Panc1 (cell line): ENCODE measurements at regions of chr1 and their contacts with region 1.

Region 1: DNA sequence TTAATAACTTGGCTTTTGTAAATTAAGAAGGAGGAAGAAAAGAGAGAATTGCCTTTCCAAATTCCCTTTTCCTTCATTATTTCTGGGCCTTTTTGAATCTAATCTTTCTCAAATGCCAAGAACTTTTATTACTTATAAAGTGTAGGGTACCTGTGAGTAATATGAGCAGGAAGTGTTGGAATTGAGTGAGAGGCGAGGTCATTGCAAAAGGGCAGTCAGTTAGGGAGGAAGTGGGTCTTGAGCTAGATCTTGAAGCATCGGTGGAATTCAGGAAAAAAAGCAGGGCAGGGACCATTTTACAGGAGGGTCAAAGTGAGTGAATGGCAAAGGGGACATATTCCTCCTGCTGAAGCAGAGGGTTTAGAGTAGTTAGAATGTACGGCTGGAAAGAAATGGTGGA is 23.4 kb downstream of the DDI2 start:
- DNase-seq: no peak
- ATAC-seq: no peak
- H3K4me3 ChIP-seq: no peak overlapping the region
- H3K27ac ChIP-seq: no peak overlapping the region
- H3K4me1 ChIP-seq: no peaks in the 10 kb centered on the region
- H3K27me3 ChIP-seq: no peaks in the 10 kb centered on the region
- CTCF ChIP-seq: no peak

Region 2: DNA sequence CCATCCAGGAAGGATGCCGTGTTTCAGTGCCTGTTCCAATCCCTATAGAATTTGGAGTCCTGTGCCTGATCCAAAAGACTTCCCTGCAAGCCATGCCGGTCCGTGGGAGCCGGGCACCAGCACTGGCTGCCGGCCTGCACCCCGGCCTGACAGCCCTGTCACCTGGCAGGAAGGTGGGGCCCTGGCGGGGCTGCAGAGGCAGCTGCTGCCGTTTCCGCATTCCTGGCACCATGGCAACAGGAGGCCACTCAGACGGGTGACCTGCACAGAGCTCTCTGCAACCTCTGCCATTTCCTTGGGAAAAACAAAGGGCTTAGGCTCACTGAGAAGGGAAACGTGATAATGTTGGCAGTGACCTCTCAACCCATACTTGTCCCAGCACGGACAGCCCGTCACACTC is 550.3 kb before region 1 on chr1:
- CTCF ChIA-PET with region 1: no interaction called
- POLR2A ChIA-PET with region 1: no interaction called
- in situ Hi-C with region 1: no loop called
- intact Hi-C with region 1: no loop called
- DNase-seq: no peak
- ATAC-seq: peak; percentile 36; the same call in 1 of the 2 replicates
- H3K4me3 ChIP-seq: no peak overlapping the region
- H3K27ac ChIP-seq: no peak overlapping the region
- H3K4me1 ChIP-seq: no peaks in the 10 kb centered on the region
- H3K27me3 ChIP-seq: no peaks in the 10 kb centered on the region; the same call in 1 of the 2 replicates
- CTCF ChIP-seq: no peak

Region 3: GRCh38 chr1:15595809-15596617 is 44.7 kb before region 1 on chr1:
- CTCF ChIA-PET with region 1: no interaction called
- POLR2A ChIA-PET with region 1: interaction called, 12 read pairs
- in situ Hi-C with region 1: no loop called
- intact Hi-C with region 1: no loop called
- DNase-seq: no peak
- ATAC-seq: no peak
- H3K4me3 ChIP-seq: no peak overlapping the region
- H3K27ac ChIP-seq: no peak overlapping the region
- H3K4me1 ChIP-seq: no peaks in the 10 kb centered on the region
- H3K27me3 ChIP-seq: no peaks in the 10 kb centered on the region
- CTCF ChIP-seq: no peak

Region 4: DNA sequence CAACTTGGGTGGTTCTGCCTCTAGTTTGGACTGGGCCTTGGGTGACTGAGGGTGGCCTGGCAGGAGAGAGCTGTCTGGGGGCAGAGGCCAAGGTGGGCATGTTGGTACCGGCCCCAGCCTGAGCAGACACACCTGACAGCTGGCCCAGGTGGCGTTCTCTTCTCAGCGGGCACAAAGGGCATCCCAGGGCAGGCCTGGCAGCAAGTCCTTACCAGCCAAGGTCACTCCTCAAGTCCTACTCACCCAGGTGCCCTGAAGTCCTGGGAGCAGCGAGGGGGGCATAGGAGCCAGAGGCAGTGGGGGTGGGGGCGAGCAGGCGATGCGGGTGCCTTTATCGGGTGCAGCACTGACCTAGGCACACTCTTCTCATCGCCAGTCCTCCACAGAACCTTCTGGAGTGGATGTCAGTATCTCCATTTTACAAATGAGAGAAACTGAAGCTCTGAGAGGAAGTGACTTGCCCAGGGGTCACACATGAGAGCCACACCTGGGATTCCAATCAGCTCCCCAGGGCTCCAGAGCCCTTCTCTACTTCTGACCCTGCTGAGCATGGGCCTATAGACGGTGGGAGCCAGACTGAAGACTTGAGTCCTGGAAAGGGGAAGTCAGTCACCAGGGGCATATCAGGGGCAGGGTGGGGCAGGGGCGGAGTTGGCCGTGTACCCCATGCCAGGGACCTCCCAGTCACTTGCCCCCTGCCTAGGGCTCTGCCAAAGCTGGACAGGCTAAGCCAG is 94.8 kb after region 1 on chr1:
- CTCF ChIA-PET with region 1: no interaction called
- POLR2A ChIA-PET with region 1: interaction called, 12 read pairs
- in situ Hi-C with region 1: no loop called
- intact Hi-C with region 1: no loop called
- DNase-seq: no peak
- ATAC-seq: no peak
- H3K4me3 ChIP-seq: no peak overlapping the region
- H3K27ac ChIP-seq: no peak overlapping the region
- H3K4me1 ChIP-seq: no peaks in the 10 kb centered on the region; the same call in 1 of the 2 replicates
- H3K27me3 ChIP-seq: no peaks in the 10 kb centered on the region
- CTCF ChIP-seq: no peak